MCF 10A (cell line): ENCODE measurements at regions of chr15 and their contacts with region 1.

Region 1: DNA sequence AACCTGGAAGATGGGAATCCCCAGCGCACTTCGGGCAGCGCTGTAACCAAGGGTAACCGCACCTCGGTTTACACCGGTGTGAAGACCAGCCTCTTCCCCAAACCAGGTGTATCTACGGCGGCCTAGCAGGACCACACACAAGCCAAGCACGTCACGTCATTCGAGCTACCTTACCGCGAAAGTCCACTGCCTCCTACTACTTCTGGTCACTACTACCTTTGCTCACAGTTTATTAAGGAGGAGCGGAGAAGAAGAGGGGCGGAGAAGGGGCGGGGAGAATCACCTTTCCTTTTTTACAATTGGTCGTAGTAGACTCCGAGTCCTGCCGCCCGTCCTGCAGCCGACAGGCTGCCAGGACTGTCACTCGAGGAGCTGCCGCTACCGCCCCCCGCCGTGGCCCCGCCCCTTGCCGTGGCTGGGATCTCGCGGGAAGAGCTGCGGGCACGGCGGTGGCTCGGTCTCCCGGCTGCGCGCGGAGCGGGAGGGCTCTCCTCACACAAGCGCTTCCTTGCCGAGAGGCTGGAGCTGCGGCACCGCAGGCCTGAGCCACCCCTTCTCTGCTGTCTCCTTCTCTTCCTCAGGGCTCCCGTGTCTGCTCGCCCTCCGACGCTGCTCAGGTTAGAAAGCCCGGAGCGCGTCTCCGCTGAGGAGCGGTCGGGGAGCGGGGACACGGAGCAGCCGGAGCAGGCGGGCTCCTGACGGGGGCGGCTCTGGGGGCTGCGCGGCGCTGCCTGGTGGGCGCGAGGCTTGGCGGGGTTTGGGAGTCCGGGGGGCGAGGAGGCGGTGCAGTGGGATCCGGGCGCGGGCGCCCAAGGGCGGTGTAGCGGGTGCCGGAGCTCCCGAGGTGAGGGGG is at the start of gene GLCE:
- DNase-seq: peak; percentile 98
- H3K4me3 Mint-ChIP-seq: peak within 1 kb of the TSS; percentile 97
- H3K27ac Mint-ChIP-seq: peak within 1 kb of the TSS; percentile 96
- H3K4me1 Mint-ChIP-seq: peaks cover 26% of the 10 kb centered on the region
- H3K27me3 Mint-ChIP-seq: no peaks in the 10 kb centered on the region
- CTCF ChIP-seq: no peak
- total RNA-seq, gene GLCE: 7.5 and 8.3 TPM in 2 replicates

Region 2: DNA sequence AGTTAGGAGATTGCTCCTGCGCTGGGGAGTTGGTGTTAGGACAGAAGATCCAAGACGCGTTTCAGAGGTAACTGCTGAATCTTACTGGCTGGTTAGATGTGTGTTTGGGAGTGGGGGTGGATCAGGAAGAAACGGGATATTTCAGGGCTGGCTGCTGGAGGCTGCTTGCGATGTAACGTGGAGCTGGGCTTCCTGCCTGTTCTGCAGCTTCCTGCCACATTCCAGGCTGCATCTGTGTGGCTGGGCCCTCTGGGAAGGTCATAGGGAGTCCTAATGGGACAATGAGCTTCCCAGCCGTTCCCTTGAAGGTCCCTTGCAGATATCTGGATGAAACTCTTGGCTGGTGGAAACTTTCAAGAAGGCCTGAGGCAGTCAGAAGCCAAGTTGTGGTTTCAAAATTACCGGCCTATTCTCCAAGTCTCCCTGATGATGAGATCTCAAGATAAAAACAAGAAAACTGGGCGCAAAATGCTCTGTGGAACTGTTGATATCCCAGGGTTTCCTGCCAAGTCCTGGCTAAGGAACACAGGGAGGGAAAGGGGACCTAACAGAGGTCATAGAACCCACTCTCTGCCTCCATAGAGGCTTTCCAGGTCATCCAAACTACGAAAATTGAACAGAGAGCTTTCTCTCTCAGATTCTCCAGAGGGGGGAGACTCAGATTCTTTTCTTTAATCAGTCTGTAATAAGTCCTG is 78.9 kb before region 1 on chr15:
- CTCF ChIA-PET with region 1: interaction called, 3 read pairs
- POLR2A ChIA-PET with region 1: interaction called, 10 read pairs
- intact Hi-C with region 1: no loop called
- DNase-seq: no peak
- H3K4me3 Mint-ChIP-seq: no peak overlapping the region
- H3K27ac Mint-ChIP-seq: no peak overlapping the region
- H3K4me1 Mint-ChIP-seq: peaks cover 37% of the 10 kb centered on the region
- H3K27me3 Mint-ChIP-seq: no peaks in the 10 kb centered on the region
- CTCF ChIP-seq: no peak

Region 3: GRCh38 chr15:69117431-69117871 is 42.9 kb before region 1 on chr15:
- CTCF ChIA-PET with region 1: interaction called, 3 read pairs
- POLR2A ChIA-PET with region 1: interaction called, 20 read pairs
- intact Hi-C with region 1: no loop called
- DNase-seq: peak; percentile 16
- H3K4me3 Mint-ChIP-seq: no peak overlapping the region
- H3K27ac Mint-ChIP-seq: no peak overlapping the region
- H3K4me1 Mint-ChIP-seq: peaks cover 21% of the 10 kb centered on the region
- H3K27me3 Mint-ChIP-seq: no peaks in the 10 kb centered on the region
- CTCF ChIP-seq: no peak

Region 4: DNA sequence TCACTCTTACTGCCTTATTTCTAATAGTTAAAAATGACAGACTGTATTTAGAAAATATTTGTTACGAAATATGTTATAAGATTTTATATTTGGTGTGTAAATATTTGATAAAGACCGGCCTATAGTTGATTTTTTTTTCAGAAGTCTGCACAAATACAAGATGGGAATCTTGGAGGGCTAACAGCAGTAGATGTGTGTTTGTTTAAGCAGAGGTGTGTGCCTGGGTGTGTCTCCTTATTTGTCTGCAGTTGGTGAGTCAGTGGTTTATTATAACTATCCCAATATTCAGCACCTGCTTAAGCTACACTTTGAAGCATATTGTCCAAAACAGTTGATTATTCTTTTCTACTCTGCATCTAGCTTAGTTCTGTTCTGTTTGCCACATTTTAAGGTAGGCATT is 12.5 kb after region 1 on chr15:
- CTCF ChIA-PET with region 1: interaction called, 8 read pairs
- POLR2A ChIA-PET with region 1: interaction called, 26 read pairs
- intact Hi-C with region 1: no loop called
- DNase-seq: peak; percentile 21
- H3K4me3 Mint-ChIP-seq: no peak overlapping the region
- H3K27ac Mint-ChIP-seq: no peak overlapping the region
- H3K4me1 Mint-ChIP-seq: peaks cover 9% of the 10 kb centered on the region
- H3K27me3 Mint-ChIP-seq: no peaks in the 10 kb centered on the region
- CTCF ChIP-seq: no peak

Region 5: DNA sequence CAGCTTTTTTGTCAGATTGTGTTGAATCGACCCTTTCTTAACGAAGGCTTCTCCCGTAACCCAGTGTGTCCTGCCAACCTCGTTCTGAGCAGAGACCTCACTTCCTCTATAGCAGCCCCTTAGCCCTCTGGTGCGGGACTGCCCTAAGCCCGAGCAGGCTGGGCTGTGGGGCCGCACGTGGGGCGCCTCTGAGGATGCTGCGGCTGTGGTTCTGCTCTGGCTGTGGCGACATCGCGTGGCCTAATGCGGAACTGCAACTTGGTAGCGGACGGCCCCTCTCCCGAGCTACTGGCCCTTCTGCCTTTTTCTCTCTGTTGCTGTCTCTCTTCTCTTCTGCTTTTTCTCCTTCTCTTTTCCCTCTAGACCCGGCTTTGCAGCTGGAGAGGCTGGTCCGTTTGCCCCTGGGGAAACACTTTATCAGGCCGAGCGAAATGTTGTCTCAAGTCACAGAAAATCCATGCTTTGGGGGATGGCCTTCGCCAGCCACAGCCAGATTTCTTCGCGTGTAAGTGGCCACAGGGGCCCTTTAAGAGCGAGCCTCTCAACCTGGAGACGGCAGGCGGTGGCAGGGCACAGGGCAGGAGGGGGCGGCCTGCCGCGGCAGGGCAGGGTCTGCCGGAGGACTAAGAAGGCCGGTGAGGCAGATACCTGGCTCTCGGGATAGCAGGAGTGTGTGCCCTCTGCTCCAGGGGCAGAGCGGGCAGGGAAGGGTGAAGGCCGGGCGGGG is 234.4 kb after region 1 on chr15:
- CTCF ChIA-PET with region 1: no interaction called
- POLR2A ChIA-PET with region 1: interaction called, 3 read pairs
- intact Hi-C with region 1: loop called (anchors 2 kb)
- DNase-seq: peak; percentile 72
- H3K4me3 Mint-ChIP-seq: no peak overlapping the region
- H3K27ac Mint-ChIP-seq: no peak overlapping the region
- H3K4me1 Mint-ChIP-seq: peaks cover 27% of the 10 kb centered on the region
- H3K27me3 Mint-ChIP-seq: no peaks in the 10 kb centered on the region
- CTCF ChIP-seq: peak; percentile 95

Region 6: DNA sequence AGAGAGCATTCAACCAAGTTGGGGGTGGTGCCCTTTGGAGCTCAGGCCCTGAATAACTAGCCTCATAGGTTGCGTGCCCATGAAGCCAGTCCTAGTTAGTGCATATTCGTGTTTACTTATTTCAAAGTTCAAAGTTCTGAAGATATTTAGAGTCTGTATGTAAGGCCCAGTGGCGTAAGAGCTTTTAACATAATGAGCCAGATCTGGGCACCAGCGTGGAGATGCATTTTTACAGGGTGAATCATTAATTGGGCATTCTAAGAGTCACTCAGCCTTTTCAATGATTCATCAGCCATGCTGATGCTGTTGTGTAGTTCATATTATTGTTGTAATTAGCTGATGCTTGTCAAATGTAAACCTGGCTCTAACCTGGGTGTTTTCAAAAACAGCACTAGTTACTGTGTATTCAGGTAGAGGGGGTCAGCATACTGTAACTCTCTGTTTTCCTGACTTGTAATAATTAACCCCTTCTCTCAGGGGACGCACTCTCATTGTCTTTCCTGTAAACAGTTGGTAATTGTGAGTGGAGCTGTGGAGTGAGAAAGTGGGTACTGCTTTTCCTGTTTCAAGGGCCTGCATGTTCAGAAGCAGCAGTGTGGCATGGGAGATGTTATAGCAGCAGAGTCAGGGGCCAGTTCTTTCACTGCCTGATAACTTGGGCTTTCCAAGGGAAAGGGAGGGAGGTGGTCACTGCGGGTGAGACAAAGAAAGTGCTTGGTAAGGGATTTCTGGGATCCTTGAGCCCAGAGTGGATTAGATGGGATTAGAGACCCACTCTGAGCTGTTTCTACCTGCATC is 397.2 kb after region 1 on chr15:
- CTCF ChIA-PET with region 1: no interaction called
- POLR2A ChIA-PET with region 1: no interaction called
- intact Hi-C with region 1: no loop called
- DNase-seq: peak; percentile 95
- H3K4me3 Mint-ChIP-seq: peak overlapping the region; percentile 35
- H3K27ac Mint-ChIP-seq: peak overlapping the region; percentile 75
- H3K4me1 Mint-ChIP-seq: peaks cover 21% of the 10 kb centered on the region
- H3K27me3 Mint-ChIP-seq: no peaks in the 10 kb centered on the region
- CTCF ChIP-seq: no peak